IMR-90 (cell line): ENCODE measurements at regions of chr15 and their contacts with region 1.

Region 1: GRCh38 chr15:75389791-75390382 is 21.5 kb upstream of the MAN2C1 start:
- DNase-seq: no peak
- ATAC-seq: peak; percentile 11; the same call in 1 of the 2 replicates
- H3K4me3 ChIP-seq: no peak overlapping the region
- H3K27ac ChIP-seq: no peak overlapping the region
- H3K4me1 ChIP-seq: peaks cover 2% of the 10 kb centered on the region; the same call in 1 of the 2 replicates
- H3K27me3 ChIP-seq: no peaks in the 10 kb centered on the region
- CTCF ChIP-seq: no peak
- POLR2A ChIP-seq: no peak
- RAD21 ChIP-seq: no peak

Region 2: GRCh38 chr15:75425966-75426500 is 36.1 kb after region 1 on chr15:
- CTCF ChIA-PET with region 1: no interaction called
- POLR2A ChIA-PET with region 1: no interaction called
- dilution Hi-C with region 1: no loop called
- in situ Hi-C with region 1: no loop called
- intact Hi-C with region 1: loop called (anchors 5 kb)
- DNase-seq: no peak
- ATAC-seq: no peak
- H3K4me3 ChIP-seq: no peak overlapping the region
- H3K27ac ChIP-seq: no peak overlapping the region
- H3K4me1 ChIP-seq: no peaks in the 10 kb centered on the region
- H3K27me3 ChIP-seq: no peaks in the 10 kb centered on the region
- CTCF ChIP-seq: no peak
- POLR2A ChIP-seq: no peak
- RAD21 ChIP-seq: no peak